Activated CD8-positive, alpha-beta T cell treated with anti-CD3 and anti-CD28 coated beads for 36 hours (primary cell): ENCODE measurements at regions of chr16 and their contacts with region 1.

Region 1: DNA sequence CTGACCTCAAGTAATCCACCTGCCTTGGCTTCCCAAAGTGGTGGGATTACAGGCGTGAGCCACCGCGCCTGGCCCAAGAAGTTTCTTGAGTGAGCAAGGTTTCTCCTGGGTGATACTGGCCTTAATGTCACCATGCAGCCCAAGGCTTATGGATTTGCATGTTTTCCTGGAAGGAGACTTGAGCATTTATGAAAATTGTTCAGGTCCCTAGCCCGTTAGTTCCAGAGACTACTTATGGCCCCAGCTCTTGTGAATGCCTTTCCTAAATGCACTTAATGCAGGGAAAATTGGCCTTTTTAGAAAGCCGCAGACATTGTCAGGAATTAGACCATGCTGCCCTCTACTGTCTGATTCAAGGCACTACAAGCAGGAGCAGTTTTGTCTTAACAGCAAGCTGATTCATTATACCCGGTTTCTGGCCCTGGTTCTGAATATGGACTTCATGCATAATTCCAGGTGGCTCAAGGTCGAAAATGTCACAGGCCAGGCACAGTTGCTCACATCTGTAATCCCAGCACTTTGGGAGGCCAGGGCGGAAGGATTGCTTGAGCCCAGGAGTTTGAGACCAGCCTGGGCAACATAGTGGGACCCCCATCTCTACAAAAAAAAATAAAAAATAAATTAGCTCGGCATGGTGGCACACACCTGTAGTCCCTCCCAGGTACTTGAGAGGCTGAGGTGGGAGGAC is 91.3 kb downstream of the SNX29 start:
- DNase-seq: peak; percentile 53
- ATAC-seq: peak; percentile 87
- H3K4me3 Mint-ChIP-seq: no peak overlapping the region
- H3K27ac Mint-ChIP-seq: no peak overlapping the region
- H3K4me1 Mint-ChIP-seq: no peaks in the 10 kb centered on the region
- H3K27me3 Mint-ChIP-seq: no peaks in the 10 kb centered on the region
- CTCF ChIP-seq: peak; percentile 96

Region 2: DNA sequence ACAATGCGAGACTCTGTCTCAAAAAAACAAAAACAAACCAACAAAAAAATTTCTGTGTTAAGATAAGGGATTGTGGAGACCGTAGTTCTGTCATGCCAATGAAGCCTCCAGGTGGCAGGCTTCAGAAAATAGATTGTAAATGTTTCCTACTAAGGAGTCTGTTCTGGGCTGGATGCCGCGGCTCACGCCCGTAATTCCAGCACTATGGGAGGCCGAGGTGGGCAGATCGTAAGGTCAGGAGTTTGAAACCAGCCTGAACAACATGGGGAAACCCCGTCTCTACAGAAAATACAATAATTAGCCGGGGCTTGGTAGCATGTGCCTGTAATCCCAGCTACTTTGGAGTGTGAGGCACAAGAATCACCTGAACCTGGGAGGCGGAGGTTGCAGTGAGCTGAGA is 95.7 kb before region 1 on chr16:
- CTCF ChIA-PET with region 1: interaction called, 12 read pairs
- POLR2A ChIA-PET with region 1: no interaction called
- intact Hi-C with region 1: no loop called
- DNase-seq: no peak
- ATAC-seq: no peak
- H3K4me3 Mint-ChIP-seq: no peak overlapping the region
- H3K27ac Mint-ChIP-seq: no peak overlapping the region
- H3K4me1 Mint-ChIP-seq: peaks cover 13% of the 10 kb centered on the region
- H3K27me3 Mint-ChIP-seq: peaks cover 2% of the 10 kb centered on the region
- CTCF ChIP-seq: no peak

Region 3: GRCh38 chr16:12057266-12057665 is 10.6 kb before region 1 on chr16:
- CTCF ChIA-PET with region 1: interaction called, 23 read pairs
- POLR2A ChIA-PET with region 1: interaction called, 3 read pairs
- intact Hi-C with region 1: no loop called
- DNase-seq: no peak
- ATAC-seq: no peak
- H3K4me3 Mint-ChIP-seq: no peak overlapping the region
- H3K27ac Mint-ChIP-seq: no peak overlapping the region
- H3K4me1 Mint-ChIP-seq: peaks cover 17% of the 10 kb centered on the region
- H3K27me3 Mint-ChIP-seq: no peaks in the 10 kb centered on the region
- CTCF ChIP-seq: no peak

Region 4: DNA sequence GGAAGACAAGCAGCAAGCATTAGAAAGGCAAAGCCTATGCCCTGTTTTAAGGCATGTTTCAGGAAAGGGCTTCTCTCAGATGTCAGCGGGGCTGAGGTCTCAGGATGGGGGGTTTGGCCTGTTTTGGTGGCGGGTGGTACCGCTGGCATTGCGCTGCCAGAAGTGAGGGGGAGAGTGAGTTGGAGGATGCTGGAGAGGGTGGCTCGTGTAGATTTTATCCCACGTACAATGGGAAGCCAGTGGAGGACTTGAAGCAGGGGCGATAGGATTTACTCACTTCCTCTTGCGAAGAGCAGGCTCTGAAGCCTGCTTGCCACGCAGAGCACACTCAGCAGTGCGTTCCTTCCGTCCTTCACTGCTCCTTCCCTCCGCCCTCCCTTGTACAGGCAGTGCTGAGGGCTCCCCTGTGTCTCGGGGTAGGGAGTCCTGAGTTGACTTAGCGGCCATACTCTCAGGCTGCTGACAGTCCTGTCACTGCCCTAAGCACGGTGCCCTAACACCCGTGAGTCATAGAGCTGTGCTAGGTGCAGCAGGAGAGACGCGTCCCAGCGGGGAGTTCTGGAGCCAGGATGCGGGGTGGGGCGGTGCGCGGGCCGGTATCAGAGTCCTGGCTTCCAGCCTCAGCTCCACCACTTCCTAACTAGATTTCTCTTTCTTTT is 21.8 kb after region 1 on chr16:
- CTCF ChIA-PET with region 1: interaction called, 25 read pairs
- POLR2A ChIA-PET with region 1: no interaction called
- intact Hi-C with region 1: no loop called
- DNase-seq: peak; percentile 65
- ATAC-seq: peak; percentile 92
- H3K4me3 Mint-ChIP-seq: peak overlapping the region; percentile 70
- H3K27ac Mint-ChIP-seq: peak overlapping the region; percentile 93
- H3K4me1 Mint-ChIP-seq: peaks cover 34% of the 10 kb centered on the region
- H3K27me3 Mint-ChIP-seq: no peaks in the 10 kb centered on the region
- CTCF ChIP-seq: no peak